KBM-7 (cell line): ENCODE measurements at regions of chr17 and their contacts with region 1.

Region 1: GRCh38 chr17:9261081-9262012 is 240.0 kb downstream of the NTN1 start:
- DNase-seq: no peak

Region 2: GRCh38 chr17:8727065-8727511 is 534.3 kb before region 1 on chr17:
- in situ Hi-C with region 1: no loop called
- DNase-seq: no peak

Region 3: GRCh38 chr17:8954339-8954738 is 307.0 kb before region 1 on chr17:
- in situ Hi-C with region 1: no loop called
- DNase-seq: peak; percentile 90

Region 4: DNA sequence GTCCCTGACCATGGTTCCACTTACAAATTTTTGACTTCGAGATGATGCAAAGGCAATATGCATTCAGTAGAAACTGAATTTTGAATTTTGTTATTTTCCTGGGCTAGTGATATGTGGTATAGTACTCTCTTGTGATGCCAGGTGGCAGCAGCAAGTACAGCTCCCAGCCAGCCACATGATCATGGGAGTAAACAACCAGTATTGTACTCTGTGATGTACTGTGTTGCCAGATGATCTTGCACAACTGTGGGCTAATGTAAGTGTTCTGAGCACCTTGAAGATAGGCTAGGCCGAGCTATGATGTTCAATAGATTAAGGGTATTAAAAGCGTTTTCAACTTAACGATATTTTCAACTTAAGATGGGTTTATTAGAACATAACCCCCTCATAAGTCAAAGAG is 63.5 kb after region 1 on chr17:
- in situ Hi-C with region 1: loop called (anchors 10 kb)
- DNase-seq: no peak

Region 5: DNA sequence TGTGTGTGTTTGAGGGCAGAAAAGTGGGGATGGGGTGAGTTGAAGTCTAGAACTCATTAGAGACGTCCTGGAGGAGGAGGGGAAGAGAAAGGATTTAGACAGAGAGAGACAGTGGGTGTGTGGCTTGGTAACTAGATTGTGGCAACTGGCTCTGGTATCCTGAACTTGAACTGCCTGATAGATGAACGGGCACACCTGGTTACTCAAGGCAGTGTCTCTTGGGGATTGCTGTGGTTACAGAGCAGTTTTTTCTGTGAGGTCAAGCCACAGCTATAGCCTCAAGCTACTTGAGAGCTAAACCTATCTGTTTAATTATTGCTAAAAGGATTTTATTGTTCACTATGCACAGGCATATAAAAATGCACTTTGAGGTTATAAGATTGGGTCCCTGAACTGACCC is 1317.9 kb after region 1 on chr17:
- in situ Hi-C with region 1: no loop called
- DNase-seq: no peak